Common myeloid progenitor, CD34-positive (primary cell): ENCODE measurements at regions of chr3 and their contacts with region 1.

Region 1: DNA sequence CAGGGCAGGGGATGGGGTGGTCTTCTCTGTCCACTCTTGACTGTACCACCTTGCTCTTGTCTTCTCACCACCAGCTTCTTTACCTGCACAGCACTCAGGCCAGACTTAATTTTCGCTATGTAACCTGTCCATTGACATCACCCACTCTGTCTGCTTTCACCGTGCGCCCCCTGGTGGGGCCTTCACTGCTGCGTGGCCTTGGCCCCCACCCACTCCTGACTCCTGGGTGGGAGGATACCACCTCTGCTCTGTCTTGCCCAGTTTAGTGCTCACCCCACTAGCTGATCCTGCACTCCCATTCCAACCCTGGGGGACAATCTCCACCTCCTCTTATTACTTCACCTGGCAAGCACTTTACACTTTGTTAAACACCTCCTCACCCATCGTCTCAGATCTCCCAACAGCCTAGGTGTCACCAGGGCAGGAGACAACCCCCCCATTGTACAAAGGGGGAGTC is 17.7 kb downstream of the PTH1R start:
- DNase-seq: peak; percentile 80 to 83 (median 81)
- H3K4me3 ChIP-seq: no peak overlapping the region
- H3K27ac ChIP-seq: no peak overlapping the region
- H3K4me1 ChIP-seq: peaks cover 0 to 28% (median 18%) of the 10 kb centered on the region in 4 experiments
- H3K27me3 ChIP-seq: peaks cover 0 to 19% (median 6%) of the 10 kb centered on the region in 5 experiments

Region 2: DNA sequence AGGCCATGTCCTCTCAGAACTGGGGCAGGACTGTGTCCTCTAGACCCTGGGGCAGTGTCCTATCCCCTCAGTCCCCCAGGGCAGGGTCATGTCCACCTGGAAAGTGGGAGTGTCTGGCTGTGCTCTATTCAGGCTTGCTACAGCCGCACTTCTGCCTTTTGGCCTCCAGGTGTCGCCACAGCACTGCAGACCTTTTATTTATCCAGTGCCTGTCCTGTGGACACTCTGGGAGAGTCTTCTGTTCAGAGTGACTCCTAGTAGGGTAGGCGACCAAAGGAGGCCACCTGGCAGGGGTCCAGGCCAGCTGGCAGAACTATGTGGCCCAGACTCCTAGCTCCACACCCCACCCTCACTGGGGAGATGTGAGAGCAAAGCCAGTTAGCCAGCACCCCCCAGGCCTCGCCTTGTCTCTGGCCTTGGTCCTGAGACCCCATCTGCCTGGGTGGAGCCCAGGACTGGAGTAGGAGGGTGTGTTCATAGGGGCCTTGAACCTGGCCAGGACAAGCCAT is 190.2 kb before region 1 on chr3:
- CTCF ChIA-PET with region 1: interaction called, 54 read pairs
- POLR2A ChIA-PET with region 1: no interaction called
- DNase-seq: peak; percentile 58 to 77 (median 73)
- H3K4me3 ChIP-seq: no peak overlapping the region
- H3K27ac ChIP-seq: no peak overlapping the region
- H3K4me1 ChIP-seq: peaks cover 0 to 7% (median 5%) of the 10 kb centered on the region in 4 experiments
- H3K27me3 ChIP-seq: peaks cover 0 to 18% (median 5%) of the 10 kb centered on the region in 5 experiments

Region 3: DNA sequence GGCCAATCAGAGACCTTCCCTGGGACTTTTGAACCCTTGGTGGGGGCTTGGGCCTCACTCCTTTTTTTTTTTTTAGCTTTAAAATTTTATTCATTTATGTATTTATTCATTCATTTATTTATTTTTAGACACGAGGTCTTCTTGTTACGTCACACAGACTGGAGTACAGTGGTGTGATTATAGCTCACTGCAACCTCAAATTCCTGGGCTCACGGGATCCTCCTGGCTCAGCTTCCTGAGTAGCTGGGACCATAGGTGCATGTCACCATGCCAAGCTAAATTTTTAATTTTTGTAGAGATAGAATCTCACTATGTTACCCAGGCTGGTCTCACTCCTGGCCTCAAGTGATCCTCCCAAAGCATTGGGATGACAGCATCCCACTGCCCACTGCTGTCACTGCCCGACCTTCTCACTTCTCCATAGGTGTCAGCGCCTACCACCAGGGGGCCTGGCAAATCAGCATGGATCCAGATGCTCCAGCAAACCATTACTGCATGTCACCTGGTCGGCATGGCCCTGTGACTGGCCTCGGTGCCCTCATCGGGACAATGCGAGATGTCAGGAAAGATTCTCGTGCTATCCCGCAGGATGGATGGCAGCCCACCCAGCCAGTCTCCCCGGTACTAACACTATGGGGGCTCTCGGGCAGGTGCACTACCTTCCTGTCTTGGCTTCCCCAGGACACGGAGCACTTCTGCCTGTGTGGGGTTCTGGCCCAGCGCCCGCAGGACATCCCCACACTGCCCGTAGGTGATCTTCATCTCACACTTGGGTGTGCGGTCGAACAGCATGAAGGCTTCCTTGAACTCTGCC is 35.0 kb before region 1 on chr3:
- CTCF ChIA-PET with region 1: interaction called, 68 read pairs
- POLR2A ChIA-PET with region 1: no interaction called
- DNase-seq: peak in 2 of 3 donors; percentile 44 to 46
- H3K4me3 ChIP-seq: no peak overlapping the region
- H3K27ac ChIP-seq: no peak overlapping the region
- H3K4me1 ChIP-seq: no peaks in the 10 kb centered on the region
- H3K27me3 ChIP-seq: peaks cover 0 to 1% (median 0%) of the 10 kb centered on the region in 5 experiments

Region 4: GRCh38 chr3:46874430-46874829 is 20.8 kb before region 1 on chr3:
- CTCF ChIA-PET with region 1: interaction called, 68 read pairs
- POLR2A ChIA-PET with region 1: interaction called, 3 read pairs
- DNase-seq: peak in 2 of 3 donors; percentile 59 to 65
- H3K4me3 ChIP-seq: no peak overlapping the region
- H3K27ac ChIP-seq: no peak overlapping the region
- H3K4me1 ChIP-seq: peaks cover 4 to 41% (median 36%) of the 10 kb centered on the region in 4 experiments
- H3K27me3 ChIP-seq: no peaks in the 10 kb centered on the region

Region 5: GRCh38 chr3:46909535-46910442 is 14.6 kb after region 1 on chr3:
- CTCF ChIA-PET with region 1: interaction called, 15 read pairs
- POLR2A ChIA-PET with region 1: no interaction called
- DNase-seq: peak; percentile 80 to 90 (median 88)
- H3K4me3 ChIP-seq: peak overlapping the region in 1 of 7 experiments; percentile 14
- H3K27ac ChIP-seq: no peak overlapping the region
- H3K4me1 ChIP-seq: peaks cover 0 to 10% (median 3%) of the 10 kb centered on the region in 4 experiments
- H3K27me3 ChIP-seq: no peaks in the 10 kb centered on the region

Region 6: GRCh38 chr3:47009225-47010110 is 114.2 kb after region 1 on chr3:
- CTCF ChIA-PET with region 1: no interaction called
- POLR2A ChIA-PET with region 1: no interaction called
- DNase-seq: peak; percentile 91 to 96 (median 95)
- H3K4me3 ChIP-seq: peak overlapping the region in 6 of 7 experiments; percentile 37 to 81 (median 59)
- H3K27ac ChIP-seq: peak overlapping the region; percentile 76 to 89
- H3K4me1 ChIP-seq: peaks cover 0 to 25% (median 10%) of the 10 kb centered on the region in 4 experiments
- H3K27me3 ChIP-seq: no peaks in the 10 kb centered on the region